CD4-positive, alpha-beta memory T cell (primary cell): ENCODE measurements at regions of chr11 and their contacts with region 1.

Region 1: DNA sequence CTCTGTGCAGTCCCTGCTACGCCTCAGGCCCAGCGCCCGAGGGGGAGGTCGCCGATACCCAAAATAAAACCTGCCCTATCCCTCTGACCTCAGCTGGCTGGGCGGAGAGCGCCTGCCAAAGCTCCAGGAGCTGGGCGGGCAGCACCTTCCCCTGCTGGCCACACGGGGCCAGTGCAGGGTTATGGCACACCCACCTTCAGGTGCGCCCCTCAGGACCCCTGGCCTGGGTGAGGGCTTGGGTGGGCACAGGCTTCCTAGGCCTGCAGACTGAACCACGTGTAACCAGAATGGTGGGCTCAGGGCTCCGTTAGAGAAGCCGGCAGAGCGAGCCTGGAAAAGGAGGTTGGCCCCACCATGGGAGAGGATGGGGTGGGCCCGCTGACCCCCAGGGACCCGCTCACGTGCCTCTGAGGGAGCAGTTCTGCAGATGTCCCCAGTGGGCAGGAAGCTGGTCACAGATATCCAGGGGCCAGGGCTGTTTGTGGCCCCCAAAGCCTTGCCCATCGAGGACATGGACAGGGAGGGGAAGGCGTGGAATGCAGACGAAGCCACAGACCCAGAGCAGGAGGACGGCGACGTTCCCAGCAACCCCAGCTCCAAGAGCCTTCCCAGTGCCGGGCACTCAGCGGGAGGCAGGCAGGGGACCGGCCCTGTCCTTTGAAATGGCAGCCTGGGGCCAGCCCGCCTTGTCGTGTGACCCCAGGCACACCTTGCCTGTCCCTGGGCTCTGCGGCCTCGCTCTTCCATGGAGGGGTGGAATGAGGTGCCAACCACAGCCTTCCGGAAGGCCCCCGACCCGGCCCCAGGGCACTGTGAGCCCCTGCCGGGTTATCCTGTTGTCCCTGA is 1.6 kb upstream of the TNNT3 start:
- DNase-seq: peak in 1 of 5 donors; percentile 11
- H3K4me3 ChIP-seq: no peak overlapping the region
- H3K4me3 Mint-ChIP-seq: no peak overlapping the region
- H3K27ac ChIP-seq: no peak overlapping the region
- H3K27ac Mint-ChIP-seq: peak overlapping the region in 1 of 7 donors; percentile 18
- H3K4me1 ChIP-seq: no peaks in the 10 kb centered on the region
- H3K4me1 Mint-ChIP-seq: peaks cover 6 to 12% (median 9%) of the 10 kb centered on the region in 4 donors
- H3K27me3 ChIP-seq: no peaks in the 10 kb centered on the region
- H3K27me3 Mint-ChIP-seq: peaks cover 7% of the 10 kb centered on the region in 2 donors

Region 2: GRCh38 chr11:1837171-1838076 is 80.5 kb before region 1 on chr11:
- CTCF ChIA-PET with region 1: interaction called, 4 read pairs
- POLR2A ChIA-PET with region 1: interaction called, 3 read pairs
- intact Hi-C with region 1: loop called (anchors 1 kb)
- DNase-seq: peak; percentile 63 to 79 (median 75)
- H3K4me3 ChIP-seq: no peak overlapping the region
- H3K4me3 Mint-ChIP-seq: no peak overlapping the region
- H3K27ac ChIP-seq: no peak overlapping the region
- H3K27ac Mint-ChIP-seq: peak overlapping the region in 1 of 7 donors; percentile 30
- H3K4me1 ChIP-seq: peaks cover 20% of the 10 kb centered on the region
- H3K4me1 Mint-ChIP-seq: peaks cover 5 to 10% (median 6%) of the 10 kb centered on the region in 4 donors
- H3K27me3 ChIP-seq: no peaks in the 10 kb centered on the region
- H3K27me3 Mint-ChIP-seq: no peaks in the 10 kb centered on the region

Region 3: DNA sequence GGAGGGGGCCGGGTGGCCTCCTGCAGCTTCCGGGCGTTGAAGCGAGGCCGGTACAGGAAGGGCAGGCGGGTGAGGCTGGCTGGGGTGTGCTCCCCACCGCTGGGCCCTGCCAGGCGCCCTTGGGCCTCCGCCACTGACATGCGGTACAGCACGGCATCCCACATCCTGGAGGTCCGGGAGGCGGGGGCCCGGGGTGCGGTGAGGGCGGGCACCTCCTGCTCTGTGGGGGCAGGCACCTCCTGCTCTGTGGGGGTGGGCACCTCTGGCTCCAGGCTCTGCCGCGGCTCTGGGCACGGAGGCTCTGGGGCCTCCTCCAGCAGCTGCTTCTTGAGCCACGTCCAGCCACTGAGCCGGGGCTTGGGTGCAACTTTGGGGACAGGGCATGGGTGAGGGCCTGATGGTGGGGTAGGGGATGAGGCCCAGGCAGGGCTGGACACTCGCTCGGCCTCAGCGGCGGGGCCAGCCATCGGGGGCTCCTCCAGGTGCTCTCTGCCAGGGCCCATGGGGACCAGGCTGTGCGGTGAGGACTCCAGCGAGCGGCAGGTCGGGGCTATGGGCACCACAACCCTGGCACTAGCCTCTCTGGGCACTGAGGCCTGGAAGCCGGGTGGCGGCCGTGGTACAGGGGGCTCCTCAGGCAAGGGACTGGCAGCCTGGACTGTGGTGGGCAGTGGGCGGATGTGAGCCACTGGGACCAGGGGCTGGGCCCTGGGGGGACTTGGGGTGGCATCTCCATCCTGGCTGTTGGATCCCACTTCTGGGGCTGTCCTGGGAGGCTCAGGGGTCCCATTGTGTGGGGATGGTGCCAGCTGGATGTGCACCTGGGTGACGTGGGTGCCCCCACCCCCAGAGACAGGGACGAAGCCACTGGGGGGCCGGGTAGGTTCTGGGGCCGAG is 28.4 kb before region 1 on chr11:
- CTCF ChIA-PET with region 1: interaction called, 7 read pairs
- POLR2A ChIA-PET with region 1: interaction called, 63 read pairs
- intact Hi-C with region 1: loop called (anchors 5 kb)
- DNase-seq: peak; percentile 83 to 85 (median 84)
- H3K4me3 ChIP-seq: peak overlapping the region in 1 of 2 donors; percentile 39
- H3K4me3 Mint-ChIP-seq: peak overlapping the region; percentile 14 to 84 (median 70)
- H3K27ac ChIP-seq: peak overlapping the region; percentile 53
- H3K27ac Mint-ChIP-seq: peak overlapping the region; percentile 17 to 94 (median 88)
- H3K4me1 ChIP-seq: peaks cover 47% of the 10 kb centered on the region
- H3K4me1 Mint-ChIP-seq: peaks cover 23 to 44% (median 32%) of the 10 kb centered on the region in 4 donors
- H3K27me3 ChIP-seq: no peaks in the 10 kb centered on the region
- H3K27me3 Mint-ChIP-seq: no peaks in the 10 kb centered on the region

Region 4: DNA sequence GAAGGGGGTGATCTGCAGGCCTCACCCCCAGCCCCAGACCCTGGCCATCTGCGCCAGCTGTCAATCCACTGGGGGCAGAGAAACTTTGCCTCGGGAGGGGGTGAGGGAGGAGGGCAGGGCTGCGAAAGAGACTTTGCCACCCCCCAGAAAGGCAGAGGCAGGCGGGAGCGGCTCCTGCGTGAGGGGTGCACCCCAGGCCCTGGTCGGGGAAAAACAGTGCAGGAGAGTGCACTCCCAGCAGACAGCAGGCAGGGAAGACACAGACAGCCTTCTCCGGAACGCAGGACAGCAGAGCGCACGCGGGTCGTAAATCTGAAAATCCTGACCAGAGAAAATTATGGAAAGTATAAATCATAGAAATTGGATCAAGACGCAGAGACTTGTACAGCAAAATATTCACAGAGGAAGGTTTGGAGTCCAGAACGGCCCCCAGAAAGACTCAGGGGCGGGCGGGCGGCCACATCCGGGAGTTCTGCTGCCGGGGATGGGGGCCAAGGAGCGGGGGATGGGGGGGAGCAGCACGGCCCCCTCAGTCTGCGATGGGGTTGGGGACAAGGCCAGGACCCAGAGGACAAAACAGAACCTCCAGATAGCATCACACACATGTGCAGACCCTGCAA is 21.2 kb after region 1 on chr11:
- CTCF ChIA-PET with region 1: no interaction called
- POLR2A ChIA-PET with region 1: interaction called, 4 read pairs
- intact Hi-C with region 1: loop called (anchors 1 kb)
- DNase-seq: peak in 1 of 5 donors; percentile 8
- H3K4me3 ChIP-seq: no peak overlapping the region
- H3K4me3 Mint-ChIP-seq: peak overlapping the region in 1 of 8 donors; percentile 10
- H3K27ac ChIP-seq: no peak overlapping the region
- H3K27ac Mint-ChIP-seq: no peak overlapping the region
- H3K4me1 ChIP-seq: no peaks in the 10 kb centered on the region
- H3K4me1 Mint-ChIP-seq: peaks cover 1 to 11% (median 5%) of the 10 kb centered on the region in 4 donors
- H3K27me3 ChIP-seq: no peaks in the 10 kb centered on the region
- H3K27me3 Mint-ChIP-seq: no peaks in the 10 kb centered on the region